CD8-positive, alpha-beta memory T cell (primary cell): ENCODE measurements at regions of chr15 and their contacts with region 1.

Region 1: DNA sequence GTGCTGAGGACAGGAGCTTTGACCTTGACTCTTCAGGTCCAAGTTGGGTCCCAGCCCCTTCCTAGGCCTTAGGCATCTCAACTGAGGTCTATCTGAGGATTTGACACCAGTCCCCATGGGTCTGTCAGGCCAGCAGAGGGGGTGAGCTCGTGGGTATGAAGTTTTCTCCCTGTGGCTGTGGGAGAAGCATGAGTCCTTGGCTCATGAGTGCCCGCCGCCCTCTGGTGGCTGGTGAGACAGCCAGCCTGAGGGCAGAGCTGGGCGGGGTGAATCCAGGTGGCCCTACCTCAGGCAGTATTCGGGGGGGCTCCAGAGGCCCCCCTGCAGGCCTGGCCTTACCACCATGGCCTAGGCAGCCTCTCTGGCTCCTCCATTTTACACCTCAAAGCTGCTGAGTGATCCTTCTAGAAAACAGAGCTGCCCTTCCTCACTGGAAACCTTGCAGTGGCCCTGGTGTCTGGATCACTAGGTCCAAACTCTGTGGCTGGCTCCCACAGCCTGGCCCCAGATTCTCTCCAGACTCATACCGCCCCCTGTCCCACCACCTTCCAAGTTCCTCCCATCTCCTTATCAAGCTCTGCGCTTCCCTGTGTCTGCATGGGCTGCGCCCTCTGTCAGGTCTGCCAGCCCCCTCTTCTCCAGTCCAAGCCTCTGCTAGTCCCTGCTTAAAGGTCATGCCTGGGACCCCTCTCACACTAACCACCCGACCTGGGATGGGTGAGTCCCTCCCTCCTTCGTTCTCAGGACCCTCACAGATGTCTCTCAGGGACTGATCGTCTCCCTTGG is 16.1 kb downstream of the SH2D7 start:
- DNase-seq: peak; percentile 75 to 89 (median 77)
- H3K4me3 ChIP-seq: no peak overlapping the region
- H3K4me3 Mint-ChIP-seq: no peak overlapping the region
- H3K27ac ChIP-seq: no peak overlapping the region
- H3K27ac Mint-ChIP-seq: peak overlapping the region in 4 of 8 donors; percentile 31 to 86 (median 55)
- H3K4me1 ChIP-seq: peaks cover 32% of the 10 kb centered on the region
- H3K4me1 Mint-ChIP-seq: peaks cover 34 to 45% (median 34%) of the 10 kb centered on the region in 3 donors
- H3K27me3 ChIP-seq: no peaks in the 10 kb centered on the region
- H3K27me3 Mint-ChIP-seq: peaks cover 0 to 3% of the 10 kb centered on the region in 2 donors

Region 2: DNA sequence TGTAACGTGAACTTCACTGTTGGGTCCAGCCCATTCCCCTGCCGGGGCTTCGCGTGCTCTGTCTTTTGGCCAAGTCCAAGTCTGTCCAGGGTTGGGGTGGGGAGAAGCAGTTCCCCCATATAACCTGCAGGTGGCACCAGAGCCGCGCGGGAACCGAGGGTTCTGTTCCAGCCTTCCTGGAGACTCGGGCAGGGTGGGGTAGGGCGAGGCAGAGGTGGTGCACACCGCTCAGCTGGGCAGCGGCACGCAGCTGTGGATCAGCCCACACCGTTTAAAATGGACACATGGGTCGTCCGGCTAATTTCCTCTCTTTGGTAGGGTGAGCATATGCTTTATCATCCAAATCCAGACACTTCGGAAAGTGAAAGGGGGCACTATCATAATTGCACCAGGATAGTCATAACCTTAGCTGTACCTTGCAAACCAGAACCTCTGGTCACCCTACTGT is 149.0 kb before region 1 on chr15:
- CTCF ChIA-PET with region 1: interaction called, 146 read pairs
- POLR2A ChIA-PET with region 1: interaction called, 5 read pairs
- DNase-seq: peak; percentile 55 to 81 (median 63)
- H3K4me3 ChIP-seq: no peak overlapping the region
- H3K4me3 Mint-ChIP-seq: peak overlapping the region in 1 of 7 donors; percentile 27
- H3K27ac ChIP-seq: no peak overlapping the region
- H3K27ac Mint-ChIP-seq: no peak overlapping the region
- H3K4me1 ChIP-seq: no peaks in the 10 kb centered on the region
- H3K4me1 Mint-ChIP-seq: peaks cover 5 to 12% (median 7%) of the 10 kb centered on the region in 3 donors
- H3K27me3 ChIP-seq: no peaks in the 10 kb centered on the region
- H3K27me3 Mint-ChIP-seq: peaks cover 2 to 6% of the 10 kb centered on the region in 2 donors

Region 3: DNA sequence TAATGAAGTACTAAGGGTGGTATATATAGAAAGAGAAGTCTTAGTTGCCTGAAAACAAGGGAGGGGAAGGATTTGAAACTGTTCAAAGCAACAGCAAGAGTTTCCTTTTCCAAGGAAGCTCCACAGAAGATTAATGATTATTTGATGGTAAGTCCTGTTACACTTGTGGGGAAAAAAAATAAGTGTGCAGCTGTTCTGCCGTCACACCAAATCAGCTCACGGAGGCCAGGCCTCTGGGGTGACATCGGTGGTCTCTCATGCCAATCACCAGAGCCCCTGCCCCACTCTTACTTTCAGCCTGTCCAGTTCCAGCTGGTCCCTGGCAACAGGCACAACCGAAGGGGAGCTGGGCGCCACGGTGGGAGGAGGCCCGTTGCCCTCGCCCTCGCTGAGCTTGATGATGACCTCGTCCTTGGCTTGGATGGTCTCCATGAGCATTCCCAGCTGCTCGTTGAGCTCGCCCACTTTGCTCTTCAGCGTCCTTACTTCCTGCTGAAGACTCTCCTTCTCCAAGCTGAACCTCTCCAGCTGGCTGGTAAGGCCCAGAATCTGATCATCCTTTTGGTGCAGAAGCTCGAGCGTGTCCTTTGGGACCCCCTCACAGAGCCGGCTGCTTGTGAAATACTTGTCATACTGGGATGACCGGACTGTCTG is 84.5 kb before region 1 on chr15:
- CTCF ChIA-PET with region 1: interaction called, 10 read pairs
- POLR2A ChIA-PET with region 1: no interaction called
- DNase-seq: no peak
- H3K4me3 ChIP-seq: no peak overlapping the region
- H3K4me3 Mint-ChIP-seq: no peak overlapping the region
- H3K27ac ChIP-seq: no peak overlapping the region
- H3K27ac Mint-ChIP-seq: peak overlapping the region in 2 of 8 donors; percentile 31 to 36
- H3K4me1 ChIP-seq: no peaks in the 10 kb centered on the region
- H3K4me1 Mint-ChIP-seq: peaks cover 11 to 19% (median 12%) of the 10 kb centered on the region in 3 donors
- H3K27me3 ChIP-seq: no peaks in the 10 kb centered on the region
- H3K27me3 Mint-ChIP-seq: no peaks in the 10 kb centered on the region

Region 4: DNA sequence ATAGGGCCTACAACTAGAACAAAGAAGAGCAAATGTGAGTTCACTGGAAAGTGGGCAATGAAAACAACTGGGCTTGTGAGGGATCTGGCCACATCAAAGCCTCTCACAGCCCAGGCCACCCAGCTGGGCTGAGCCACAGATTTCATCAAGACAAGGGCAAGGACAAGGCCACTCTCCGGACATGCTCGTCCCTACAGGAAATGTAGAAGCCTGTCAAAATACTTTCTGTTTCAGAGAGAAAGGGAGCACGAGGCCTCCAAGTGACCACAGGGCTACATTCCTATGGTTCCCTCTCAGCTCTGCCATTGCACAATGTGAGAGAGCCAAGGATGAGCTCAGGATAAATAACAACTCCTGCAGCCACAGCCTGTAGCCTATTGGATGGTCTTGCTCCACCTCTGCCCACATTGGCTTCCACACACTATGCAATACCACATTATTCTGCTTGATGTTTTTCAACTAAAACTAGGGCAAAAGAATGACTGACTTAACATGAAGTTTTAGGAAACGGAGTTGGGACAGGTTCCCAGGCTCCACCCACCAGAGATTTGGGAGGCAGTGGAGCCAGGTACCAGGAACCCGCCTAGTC is 43.1 kb before region 1 on chr15:
- CTCF ChIA-PET with region 1: interaction called, 30 read pairs
- POLR2A ChIA-PET with region 1: interaction called, 5 read pairs
- DNase-seq: no peak
- H3K4me3 ChIP-seq: peak overlapping the region; percentile 23
- H3K4me3 Mint-ChIP-seq: no peak overlapping the region
- H3K27ac ChIP-seq: peak overlapping the region; percentile 17
- H3K27ac Mint-ChIP-seq: no peak overlapping the region
- H3K4me1 ChIP-seq: peaks cover 95% of the 10 kb centered on the region
- H3K4me1 Mint-ChIP-seq: peaks cover 2 to 9% (median 5%) of the 10 kb centered on the region in 3 donors
- H3K27me3 ChIP-seq: no peaks in the 10 kb centered on the region
- H3K27me3 Mint-ChIP-seq: peaks cover 0 to 1% of the 10 kb centered on the region in 2 donors

Region 5: GRCh38 chr15:78131295-78132061 is 23.0 kb after region 1 on chr15 and contains the start of gene CIB2:
- CTCF ChIA-PET with region 1: interaction called, 14 read pairs
- POLR2A ChIA-PET with region 1: interaction called, 7 read pairs
- DNase-seq: peak; percentile 68 to 85 (median 78)
- H3K4me3 ChIP-seq: peak within 1 kb of the TSS; percentile 73
- H3K4me3 Mint-ChIP-seq: peak within 1 kb of the TSS; percentile 80 to 90 (median 82)
- H3K27ac ChIP-seq: peak within 1 kb of the TSS; percentile 68
- H3K27ac Mint-ChIP-seq: peak within 1 kb of the TSS; percentile 56 to 95 (median 88)
- H3K4me1 ChIP-seq: peaks cover 12% of the 10 kb centered on the region
- H3K4me1 Mint-ChIP-seq: peaks cover 17 to 25% (median 21%) of the 10 kb centered on the region in 3 donors
- H3K27me3 ChIP-seq: no peaks in the 10 kb centered on the region
- H3K27me3 Mint-ChIP-seq: no peaks in the 10 kb centered on the region
- total RNA-seq, gene CIB2: 2.1 to 2.3 TPM